Panc1 (cell line): ENCODE measurements at regions of chr9 and their contacts with region 1.

Region 1: GRCh38 chr9:77163884-77164283 is 13.4 kb upstream of the VPS13A start:
- DNase-seq: no peak
- ATAC-seq: no peak
- H3K4me3 ChIP-seq: no peak overlapping the region
- H3K27ac ChIP-seq: no peak overlapping the region
- H3K4me1 ChIP-seq: no peaks in the 10 kb centered on the region
- H3K27me3 ChIP-seq: no peaks in the 10 kb centered on the region
- CTCF ChIP-seq: no peak

Region 2: GRCh38 chr9:77111408-77111807 is 52.5 kb before region 1 on chr9:
- CTCF ChIA-PET with region 1: no interaction called
- POLR2A ChIA-PET with region 1: no interaction called
- in situ Hi-C with region 1: no loop called
- intact Hi-C with region 1: no loop called
- DNase-seq: no peak
- ATAC-seq: no peak
- H3K4me3 ChIP-seq: no peak overlapping the region
- H3K27ac ChIP-seq: no peak overlapping the region
- H3K4me1 ChIP-seq: no peaks in the 10 kb centered on the region
- H3K27me3 ChIP-seq: 0 out of 2 replicates have a peak, but pooled peaks cover under 1% of the 10 kb centered on the region
- CTCF ChIP-seq: no peak

Region 3: GRCh38 chr9:77131399-77131798 is 32.5 kb before region 1 on chr9:
- CTCF ChIA-PET with region 1: no interaction called
- POLR2A ChIA-PET with region 1: interaction called, 10 read pairs
- in situ Hi-C with region 1: no loop called
- intact Hi-C with region 1: no loop called
- DNase-seq: no peak
- ATAC-seq: no peak
- H3K4me3 ChIP-seq: no peak overlapping the region
- H3K27ac ChIP-seq: no peak overlapping the region
- H3K4me1 ChIP-seq: no peaks in the 10 kb centered on the region
- H3K27me3 ChIP-seq: no peaks in the 10 kb centered on the region
- CTCF ChIP-seq: no peak

Region 4: GRCh38 chr9:77177161-77177893 is 13.4 kb after region 1 on chr9 and contains the start of gene VPS13A:
- CTCF ChIA-PET with region 1: interaction called, 12 read pairs
- POLR2A ChIA-PET with region 1: no interaction called
- in situ Hi-C with region 1: no loop called
- intact Hi-C with region 1: no loop called
- DNase-seq: no peak
- ATAC-seq: peak; percentile 96
- H3K4me3 ChIP-seq: peak within 1 kb of the TSS; percentile 79 to 80
- H3K27ac ChIP-seq: peak within 1 kb of the TSS; percentile 80
- H3K4me1 ChIP-seq: no peaks in the 10 kb centered on the region; the same call in 1 of the 2 replicates
- H3K27me3 ChIP-seq: no peaks in the 10 kb centered on the region
- CTCF ChIP-seq: peak; percentile 54
- total RNA-seq, gene VPS13A: 26.1 TPM